ENCODE measurements at regions of chr9 and their contacts with region 1.

Region 1: GRCh38 chr9:127463911-127464310 is 12.6 kb downstream of the LRSAM1 start:
- DNase-seq: no peak
- ATAC-seq: no peak
- H3K4me3 ChIP-seq: no peak overlapping the region
- H3K4me3 Mint-ChIP-seq: no peak overlapping the region
- H3K27ac ChIP-seq: no peak overlapping the region
- H3K27ac Mint-ChIP-seq: no peak overlapping the region
- H3K4me1 ChIP-seq: no peaks in the 10 kb centered on the region
- H3K4me1 Mint-ChIP-seq: no peaks in the 10 kb centered on the region
- H3K27me3 ChIP-seq: no peaks in the 10 kb centered on the region
- H3K27me3 Mint-ChIP-seq: no peaks in the 10 kb centered on the region

Region 2: GRCh38 chr9:127233550-127233949 is 230.4 kb before region 1 on chr9:
- CTCF ChIA-PET with region 1: no interaction called
- POLR2A ChIA-PET with region 1: no interaction called
- DNase-seq: no peak
- ATAC-seq: no peak
- H3K4me3 ChIP-seq: no peak overlapping the region
- H3K4me3 Mint-ChIP-seq: no peak overlapping the region
- H3K27ac ChIP-seq: no peak overlapping the region
- H3K27ac Mint-ChIP-seq: no peak overlapping the region
- H3K4me1 ChIP-seq: no peaks in the 10 kb centered on the region
- H3K4me1 Mint-ChIP-seq: no peaks in the 10 kb centered on the region
- H3K27me3 ChIP-seq: peaks cover 0 to 16% of the 10 kb centered on the region in 2 experiments
- H3K27me3 Mint-ChIP-seq: peaks cover 22 to 24% of the 10 kb centered on the region in 2 donors

Region 3: DNA sequence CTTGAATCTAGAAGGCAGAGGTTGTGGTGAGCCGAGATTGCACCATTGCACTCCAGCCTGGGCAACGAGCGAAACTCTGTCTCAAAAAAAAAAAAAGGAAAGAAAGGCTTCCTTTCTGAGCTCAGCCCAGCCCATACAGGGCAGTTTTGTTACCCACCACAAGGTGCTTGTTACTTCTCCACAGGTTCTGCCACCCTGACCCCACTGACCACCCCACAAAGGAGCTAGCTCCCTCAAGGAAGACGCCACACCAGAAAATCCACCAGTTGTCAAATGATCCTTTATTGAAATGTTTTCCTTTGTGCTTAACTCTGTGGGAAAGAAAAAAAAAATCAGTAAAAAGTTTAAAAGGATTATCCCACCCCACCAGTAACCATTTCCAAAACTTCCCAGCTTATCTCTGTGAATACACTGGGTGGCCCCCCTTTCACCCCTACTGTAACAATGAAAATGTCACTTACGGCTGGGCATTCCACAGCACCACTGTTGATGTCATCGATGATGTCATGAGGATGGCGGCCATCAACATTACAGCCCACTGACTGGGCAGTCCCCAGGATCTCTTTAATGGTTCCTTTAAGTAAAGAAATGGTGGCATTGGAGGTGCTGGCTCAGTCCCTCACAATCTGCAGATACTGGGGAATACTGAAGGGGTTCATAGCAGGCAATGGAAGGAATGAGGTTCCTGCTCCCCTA is 16.3 kb before region 1 on chr9:
- CTCF ChIA-PET with region 1: no interaction called
- POLR2A ChIA-PET with region 1: interaction called in 1 of 2 experiments, 12 read pairs
- DNase-seq: no peak
- ATAC-seq: no peak
- H3K4me3 ChIP-seq: no peak overlapping the region
- H3K4me3 Mint-ChIP-seq: no peak overlapping the region
- H3K27ac ChIP-seq: no peak overlapping the region
- H3K27ac Mint-ChIP-seq: peak overlapping the region; percentile 19 to 28
- H3K4me1 ChIP-seq: peaks cover 14 to 37% of the 10 kb centered on the region in 2 experiments
- H3K4me1 Mint-ChIP-seq: peaks cover 37 to 47% (median 38%) of the 10 kb centered on the region in 3 donors
- H3K27me3 ChIP-seq: no peaks in the 10 kb centered on the region
- H3K27me3 Mint-ChIP-seq: no peaks in the 10 kb centered on the region

Measured in T-cell (primary cell).